Ascending aorta (tissue), 2 donors: ENCODE measurements at regions of chr3 and their contacts with region 1.

Region 1: DNA sequence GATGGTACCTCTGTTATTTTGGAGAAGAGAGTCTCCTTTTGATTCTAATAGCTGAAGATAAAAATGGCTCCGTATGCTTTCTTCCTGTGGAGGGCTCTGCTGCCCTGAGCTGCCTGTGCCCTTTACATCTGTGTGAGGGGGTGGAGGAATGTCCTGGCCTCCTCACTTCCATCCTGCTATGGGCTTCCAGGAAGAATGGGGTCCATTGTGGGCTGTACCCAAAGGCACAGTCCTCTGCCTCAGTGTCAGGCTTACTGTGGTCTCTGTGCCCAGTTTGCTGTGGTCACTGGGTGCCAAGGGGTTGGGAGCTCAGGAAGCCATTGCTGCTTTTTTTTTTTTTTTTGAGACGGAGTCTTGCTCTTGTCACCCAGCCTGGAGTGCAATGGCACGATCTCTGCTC is 14.4 kb downstream of the DAG1 start:
- DNase-seq: no peak
- H3K4me3 ChIP-seq: no peak overlapping the region
- H3K27ac ChIP-seq: peak overlapping the region; percentile 46 to 51
- H3K4me1 ChIP-seq: peaks cover 8 to 14% of the 10 kb centered on the region in 2 donors
- H3K27me3 ChIP-seq: no peaks in the 10 kb centered on the region
- CTCF ChIP-seq: no peak

Region 2: DNA sequence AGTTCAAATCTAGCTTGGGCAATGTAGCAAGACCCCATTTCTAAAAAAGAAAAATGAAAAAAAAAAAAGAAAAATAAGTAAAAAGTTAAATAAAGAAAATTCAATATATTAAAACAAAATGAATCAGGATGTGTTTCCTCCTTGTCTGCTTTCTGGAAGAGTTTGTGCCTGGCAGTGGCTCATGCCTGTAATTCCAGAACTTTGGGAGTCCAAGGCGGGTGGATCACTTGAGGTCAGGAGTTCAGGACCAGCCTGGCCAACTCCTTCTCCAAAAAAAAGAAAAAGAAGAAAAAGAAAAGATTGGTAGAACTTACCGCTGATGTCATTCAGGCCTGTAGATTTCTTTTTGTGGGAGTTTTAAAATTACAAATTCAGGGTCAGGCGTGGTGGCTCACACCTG is 22.4 kb after region 1 on chr3:
- intact Hi-C with region 1: loop called (anchors 2 kb)
- DNase-seq: no peak
- H3K4me3 ChIP-seq: no peak overlapping the region
- H3K27ac ChIP-seq: peak overlapping the region in 1 of 2 donors; percentile 51
- H3K4me1 ChIP-seq: peaks cover 0 to 5% of the 10 kb centered on the region in 2 donors
- H3K27me3 ChIP-seq: no peaks in the 10 kb centered on the region
- CTCF ChIP-seq: no peak

Region 3: GRCh38 chr3:49647741-49648140 is 163.3 kb after region 1 on chr3:
- intact Hi-C with region 1: no loop called
- DNase-seq: no peak
- H3K4me3 ChIP-seq: no peak overlapping the region
- H3K27ac ChIP-seq: no peak overlapping the region
- H3K4me1 ChIP-seq: peaks cover 2 to 4% of the 10 kb centered on the region in 2 donors
- H3K27me3 ChIP-seq: no peaks in the 10 kb centered on the region
- CTCF ChIP-seq: no peak